ENCODE measurements at regions of chr15 and their contacts with region 1.

Region 1: GRCh38 chr15:86624261-86625036 is 544.8 kb downstream of the AGBL1 start:
- DNase-seq: peak in 31 of 35 experiments; percentile 2 to 62 (median 16)
- ATAC-seq: peak; percentile 45 to 98 (median 94)
- H3K4me3 ChIP-seq: no peak overlapping the region
- H3K4me3 Mint-ChIP-seq: no peak overlapping the region
- H3K27ac ChIP-seq: no peak overlapping the region
- H3K27ac Mint-ChIP-seq: peak overlapping the region; percentile 44 to 60
- H3K4me1 ChIP-seq: peaks cover 0 to 7% of the 10 kb centered on the region in 2 experiments
- H3K4me1 Mint-ChIP-seq: peaks cover 27 to 32% (median 32%) of the 10 kb centered on the region in 3 donors
- H3K27me3 ChIP-seq: no peaks in the 10 kb centered on the region
- H3K27me3 Mint-ChIP-seq: peaks cover 0 to 3% of the 10 kb centered on the region in 2 donors

Region 2: DNA sequence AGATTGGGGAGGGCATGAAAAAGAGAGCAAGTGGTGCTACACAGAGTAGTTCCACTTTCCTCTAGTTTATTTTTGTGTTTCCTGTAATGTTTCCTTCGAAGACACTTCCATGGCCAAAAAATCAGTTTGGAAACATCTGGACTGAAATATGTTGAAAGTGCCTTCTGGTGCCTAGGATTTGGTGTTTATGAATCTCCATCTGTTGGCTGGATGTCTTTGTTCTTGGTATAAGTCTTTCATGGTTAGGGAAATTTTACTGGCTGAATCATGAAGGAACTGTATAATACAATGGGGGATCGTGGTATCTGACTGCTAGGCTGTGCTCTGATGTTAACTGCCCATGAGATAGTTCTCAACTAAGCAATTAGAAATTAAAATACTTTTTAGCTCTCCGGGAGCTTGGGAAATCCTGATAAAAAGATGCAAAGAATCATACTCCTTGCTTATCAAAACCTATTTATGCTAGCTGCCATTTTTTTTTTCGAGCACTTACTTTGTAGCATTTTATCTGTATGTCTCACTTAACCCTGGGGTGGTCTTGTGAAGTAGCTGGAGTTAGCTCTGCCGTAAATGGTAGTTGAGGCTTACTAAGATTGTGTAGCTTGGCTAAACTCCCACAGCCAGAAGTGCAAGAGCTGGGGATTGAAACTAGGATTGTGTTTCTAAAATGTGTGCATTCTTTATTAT is 1222.1 kb before region 1 on chr15:
- CTCF ChIA-PET with region 1: no interaction called
- POLR2A ChIA-PET with region 1: interaction called in 1 of 2 experiments, 10 read pairs
- DNase-seq: no peak
- ATAC-seq: peak in 1 of 4 experiments; percentile 55
- H3K4me3 ChIP-seq: no peak overlapping the region
- H3K4me3 Mint-ChIP-seq: peak overlapping the region in 1 of 3 donors; percentile 31
- H3K27ac ChIP-seq: no peak overlapping the region
- H3K27ac Mint-ChIP-seq: peak overlapping the region; percentile 6 to 30
- H3K4me1 ChIP-seq: peaks cover 20 to 21% of the 10 kb centered on the region in 2 experiments
- H3K4me1 Mint-ChIP-seq: peaks cover 80 to 87% (median 85%) of the 10 kb centered on the region in 3 donors
- H3K27me3 ChIP-seq: no peaks in the 10 kb centered on the region
- H3K27me3 Mint-ChIP-seq: no peaks in the 10 kb centered on the region

Region 3: DNA sequence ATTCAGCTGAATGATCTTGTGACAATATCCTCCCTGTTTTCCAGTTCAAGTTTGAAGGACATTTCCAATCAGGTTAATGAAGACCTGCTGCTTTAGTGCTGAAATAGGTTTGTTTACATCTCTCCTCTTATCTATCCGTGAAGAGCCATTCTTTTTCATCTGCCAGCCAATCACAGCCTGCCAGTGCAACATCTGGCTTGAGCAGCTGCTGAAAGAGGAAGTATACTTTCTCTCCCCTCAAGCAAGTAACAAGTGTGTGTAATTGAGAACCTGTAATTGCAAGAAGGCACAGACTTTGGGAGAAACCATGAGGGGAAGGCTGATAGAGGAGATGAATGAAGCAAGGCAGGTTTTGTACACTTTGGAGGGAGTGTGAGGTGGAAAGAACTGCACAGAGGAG is 140.5 kb before region 1 on chr15:
- CTCF ChIA-PET with region 1: no interaction called
- POLR2A ChIA-PET with region 1: no interaction called
- DNase-seq: no peak
- ATAC-seq: no peak
- H3K4me3 ChIP-seq: no peak overlapping the region
- H3K4me3 Mint-ChIP-seq: no peak overlapping the region
- H3K27ac ChIP-seq: no peak overlapping the region
- H3K27ac Mint-ChIP-seq: no peak overlapping the region
- H3K4me1 ChIP-seq: no peaks in the 10 kb centered on the region
- H3K4me1 Mint-ChIP-seq: no peaks in the 10 kb centered on the region
- H3K27me3 ChIP-seq: no peaks in the 10 kb centered on the region
- H3K27me3 Mint-ChIP-seq: peaks cover 0 to 3% of the 10 kb centered on the region in 2 donors

Region 4: GRCh38 chr15:86743283-86743903 is 118.9 kb after region 1 on chr15:
- CTCF ChIA-PET with region 1: interaction called in 1 of 2 experiments, 25 read pairs
- POLR2A ChIA-PET with region 1: no interaction called
- DNase-seq: peak in 33 of 35 experiments; percentile 10 to 70 (median 40)
- ATAC-seq: peak in 1 of 4 experiments; percentile 51
- H3K4me3 ChIP-seq: no peak overlapping the region
- H3K4me3 Mint-ChIP-seq: no peak overlapping the region
- H3K27ac ChIP-seq: no peak overlapping the region
- H3K27ac Mint-ChIP-seq: no peak overlapping the region
- H3K4me1 ChIP-seq: no peaks in the 10 kb centered on the region
- H3K4me1 Mint-ChIP-seq: peaks cover 0 to 3% (median 0%) of the 10 kb centered on the region in 3 donors
- H3K27me3 ChIP-seq: no peaks in the 10 kb centered on the region
- H3K27me3 Mint-ChIP-seq: no peaks in the 10 kb centered on the region